Activated naive CD4-positive, alpha-beta T cell treated with anti-CD3 and anti-CD28 coated beads for 36 hours (primary cell): ENCODE measurements at regions of chr2 and their contacts with region 1.

Region 1: GRCh38 chr2:219177552-219178376 is at the start of gene RETREG2:
- DNase-seq: peak; percentile 78
- H3K4me3 Mint-ChIP-seq: peak within 1 kb of the TSS; percentile 94
- H3K27ac Mint-ChIP-seq: peak within 1 kb of the TSS; percentile 98
- H3K4me1 Mint-ChIP-seq: peaks cover 58% of the 10 kb centered on the region
- H3K27me3 Mint-ChIP-seq: no peaks in the 10 kb centered on the region
- total RNA-seq, gene RETREG2: 44.0 to 44.1 TPM

Region 2: GRCh38 chr2:217993817-217994463 is 1183.8 kb before region 1 on chr2:
- CTCF ChIA-PET with region 1: no interaction called
- intact Hi-C with region 1: no loop called
- DNase-seq: peak; percentile 65
- H3K4me3 Mint-ChIP-seq: no peak overlapping the region
- H3K27ac Mint-ChIP-seq: no peak overlapping the region
- H3K4me1 Mint-ChIP-seq: no peaks in the 10 kb centered on the region
- H3K27me3 Mint-ChIP-seq: no peaks in the 10 kb centered on the region

Region 3: GRCh38 chr2:218216674-218217359 is 960.9 kb before region 1 on chr2 and contains the start of gene ARPC2:
- CTCF ChIA-PET with region 1: no interaction called
- intact Hi-C with region 1: loop called (anchors 2 kb)
- DNase-seq: peak; percentile 95
- H3K4me3 Mint-ChIP-seq: peak within 1 kb of the TSS; percentile 78
- H3K27ac Mint-ChIP-seq: peak within 1 kb of the TSS; percentile 88
- H3K4me1 Mint-ChIP-seq: peaks cover 29% of the 10 kb centered on the region
- H3K27me3 Mint-ChIP-seq: no peaks in the 10 kb centered on the region
- total RNA-seq, gene ARPC2: 461 to 475 TPM

Region 4: GRCh38 chr2:218710687-218711549 is 466.8 kb before region 1 on chr2 and contains the start of gene TTLL4:
- CTCF ChIA-PET with region 1: no interaction called
- intact Hi-C with region 1: loop called (anchors 1 kb)
- DNase-seq: peak; percentile 99
- H3K4me3 Mint-ChIP-seq: peak within 1 kb of the TSS; percentile 98
- H3K27ac Mint-ChIP-seq: peak within 1 kb of the TSS; percentile 80
- H3K4me1 Mint-ChIP-seq: peaks cover 15% of the 10 kb centered on the region
- H3K27me3 Mint-ChIP-seq: peaks cover 3% of the 10 kb centered on the region
- total RNA-seq, gene TTLL4: 23.7 to 24.7 TPM

Region 5: GRCh38 chr2:219160186-219161017 is 17.4 kb before region 1 on chr2 and contains the start of gene NHEJ1:
- CTCF ChIA-PET with region 1: interaction called, 67 read pairs
- intact Hi-C with region 1: loop called (anchors 1 kb)
- DNase-seq: peak; percentile 96
- H3K4me3 Mint-ChIP-seq: peak within 1 kb of the TSS; percentile 80
- H3K27ac Mint-ChIP-seq: peak within 1 kb of the TSS; percentile 88
- H3K4me1 Mint-ChIP-seq: peaks cover 13% of the 10 kb centered on the region
- H3K27me3 Mint-ChIP-seq: no peaks in the 10 kb centered on the region
- total RNA-seq, gene NHEJ1: 24.4 to 26.6 TPM

Region 6: DNA sequence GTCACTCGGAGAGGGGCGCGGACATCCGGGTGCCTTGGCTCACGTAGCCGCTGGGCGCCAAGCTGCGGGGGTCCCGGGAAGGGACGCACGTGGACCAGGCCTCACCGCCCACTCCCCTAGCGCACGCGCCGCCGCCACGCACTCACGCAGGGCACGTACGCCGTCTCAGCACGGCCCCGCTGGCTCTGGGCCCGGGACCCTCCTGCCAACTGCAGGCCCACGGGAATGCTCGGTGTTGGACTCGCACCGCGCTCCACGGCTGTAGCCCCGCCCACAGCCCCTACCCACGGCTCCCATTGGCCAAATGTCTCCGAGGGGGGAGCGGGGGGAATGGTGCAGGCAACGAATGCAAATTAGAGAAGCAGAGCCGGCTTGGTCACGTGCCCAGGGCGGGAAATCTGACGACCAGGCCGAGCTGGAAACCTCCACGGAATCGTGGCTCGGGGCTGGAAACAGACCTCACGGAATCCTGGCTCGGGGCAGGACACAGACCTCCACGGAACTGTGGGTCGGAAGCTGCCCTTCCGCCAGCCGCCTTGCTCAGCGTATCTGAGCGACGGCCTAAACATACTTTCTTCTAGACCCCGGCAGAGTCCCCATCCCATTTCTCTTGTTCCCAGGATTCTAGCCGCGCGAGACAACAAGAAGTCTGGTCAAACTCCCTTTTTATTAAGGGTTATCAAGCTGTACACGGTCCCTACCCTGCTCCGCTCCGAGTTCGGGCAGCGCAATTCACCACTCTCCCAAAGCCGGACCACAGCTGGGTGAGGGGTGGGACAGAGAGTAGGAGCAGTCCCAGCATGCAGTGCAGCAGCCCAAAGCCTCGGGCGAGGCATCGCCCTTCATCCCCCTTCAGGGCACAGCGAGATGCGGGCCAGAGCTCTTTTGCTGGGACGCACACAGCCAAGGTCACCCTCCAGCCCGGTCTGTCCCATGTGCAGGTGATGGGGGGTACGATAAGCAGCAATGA is 41.3 kb after region 1 on chr2 and contains the start of gene ABCB6:
- CTCF ChIA-PET with region 1: interaction called, 4 read pairs
- intact Hi-C with region 1: loop called (anchors 1 kb)
- DNase-seq: peak; percentile 89
- H3K4me3 Mint-ChIP-seq: peak within 1 kb of the TSS; percentile 78
- H3K27ac Mint-ChIP-seq: peak within 1 kb of the TSS; percentile 56
- H3K4me1 Mint-ChIP-seq: peaks cover 25% of the 10 kb centered on the region
- H3K27me3 Mint-ChIP-seq: no peaks in the 10 kb centered on the region
- total RNA-seq, gene ABCB6: 7.0 to 7.5 TPM

Region 7: GRCh38 chr2:219253753-219254590 is 76.2 kb after region 1 on chr2 and contains the start of gene TUBA4A:
- CTCF ChIA-PET with region 1: interaction called, 9 read pairs
- intact Hi-C with region 1: loop called (anchors 1 kb)
- DNase-seq: peak; percentile 89
- H3K4me3 Mint-ChIP-seq: peak within 1 kb of the TSS; percentile 70
- H3K27ac Mint-ChIP-seq: peak within 1 kb of the TSS; percentile 95
- H3K4me1 Mint-ChIP-seq: peaks cover 49% of the 10 kb centered on the region
- H3K27me3 Mint-ChIP-seq: no peaks in the 10 kb centered on the region
- total RNA-seq, gene TUBA4A: 112 to 116 TPM